CD8-positive, alpha-beta T cell (primary cell): ENCODE measurements at regions of chr20 and their contacts with region 1.

Region 1: DNA sequence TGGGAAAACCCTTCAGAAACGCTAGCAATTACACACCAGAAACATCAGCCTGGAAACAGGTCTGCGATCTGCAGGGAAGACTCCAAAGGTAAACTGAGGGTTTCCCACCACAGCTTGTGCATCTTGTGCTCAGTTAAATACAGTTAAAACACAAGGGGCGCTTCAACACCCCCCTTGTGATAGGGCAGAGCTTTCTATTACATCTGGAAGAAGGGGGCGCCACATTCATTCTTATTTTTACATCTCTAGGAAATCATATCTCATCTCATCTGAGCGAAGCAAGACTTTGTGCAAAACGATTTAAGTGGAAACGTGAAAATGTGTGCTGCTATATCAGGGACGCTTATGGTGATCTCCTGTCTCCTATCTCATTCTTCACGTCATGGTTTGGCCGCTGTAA is 58.5 kb downstream of the PRND start:
- DNase-seq: peak in 2 of 9 experiments; percentile 45 to 58
- ATAC-seq: peak; percentile 62
- H3K4me3 ChIP-seq: no peak overlapping the region
- H3K4me3 Mint-ChIP-seq: no peak overlapping the region
- H3K27ac ChIP-seq: no peak overlapping the region
- H3K27ac Mint-ChIP-seq: peak overlapping the region; percentile 75
- H3K4me1 ChIP-seq: no peaks in the 10 kb centered on the region
- H3K4me1 Mint-ChIP-seq: peaks cover 16% of the 10 kb centered on the region
- H3K27me3 ChIP-seq: no peaks in the 10 kb centered on the region
- H3K27me3 Mint-ChIP-seq: no peaks in the 10 kb centered on the region
- CTCF ChIP-seq: no peak

Region 2: GRCh38 chr20:4770026-4770425 is 10.2 kb before region 1 on chr20:
- CTCF ChIA-PET with region 1: interaction called, 11 read pairs
- POLR2A ChIA-PET with region 1: interaction called, 3 read pairs
- intact Hi-C with region 1: no loop called
- DNase-seq: no peak
- ATAC-seq: no peak
- H3K4me3 ChIP-seq: no peak overlapping the region
- H3K4me3 Mint-ChIP-seq: no peak overlapping the region
- H3K27ac ChIP-seq: no peak overlapping the region
- H3K27ac Mint-ChIP-seq: no peak overlapping the region
- H3K4me1 ChIP-seq: no peaks in the 10 kb centered on the region
- H3K4me1 Mint-ChIP-seq: no peaks in the 10 kb centered on the region
- H3K27me3 ChIP-seq: no peaks in the 10 kb centered on the region
- H3K27me3 Mint-ChIP-seq: no peaks in the 10 kb centered on the region
- CTCF ChIP-seq: no peak